ENCODE measurements at regions of chr9 and their contacts with region 1.

Region 1: DNA sequence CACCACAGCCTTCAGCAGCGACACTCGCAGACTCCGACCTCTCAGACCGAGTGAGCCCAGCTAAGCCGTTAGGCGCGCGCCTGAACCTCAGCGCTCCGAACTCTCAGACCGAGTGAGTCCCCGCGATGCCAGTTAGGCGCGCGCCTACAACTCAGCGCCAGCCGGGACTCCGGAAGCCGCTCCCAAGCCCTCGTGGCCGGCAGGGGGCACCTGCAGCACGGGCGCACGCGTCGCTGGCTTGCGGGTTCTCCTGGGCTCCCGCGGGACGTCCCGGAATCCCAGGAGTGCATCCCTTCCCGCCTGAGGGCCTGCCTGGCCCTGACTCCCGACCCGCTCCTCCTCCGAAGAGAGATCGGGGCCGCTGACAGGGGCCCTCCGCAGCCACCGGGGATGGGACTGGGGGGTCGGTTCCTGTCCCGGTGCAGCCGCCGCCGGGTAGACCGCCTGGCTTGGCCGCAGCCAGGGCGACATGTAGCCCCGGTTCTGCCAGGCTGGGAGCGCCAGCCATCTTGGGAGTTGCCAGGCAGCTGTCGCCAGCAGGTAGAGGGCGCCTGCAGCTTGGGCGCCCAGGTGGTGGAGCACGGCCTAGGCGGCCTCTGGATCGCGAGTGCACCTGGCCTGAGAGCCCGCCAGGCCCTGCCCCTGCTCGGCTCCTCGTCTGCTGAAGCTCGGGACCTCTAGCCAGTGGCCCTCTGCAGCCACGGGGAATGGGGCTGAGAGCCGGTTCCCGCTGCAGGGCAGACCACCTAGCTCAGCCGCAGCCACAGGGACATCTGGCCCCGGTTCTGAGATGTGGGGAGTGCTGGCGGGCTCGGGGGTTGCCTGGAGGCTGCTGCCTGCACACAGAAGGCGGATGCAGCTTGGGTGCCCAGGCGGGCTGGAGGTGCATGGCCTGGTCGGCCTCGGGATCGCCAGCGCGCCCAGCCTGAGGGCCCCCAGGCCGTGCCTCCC is at the start of gene ANKRD18A:
- DNase-seq: peak; percentile 87
- H3K4me3 Mint-ChIP-seq: peak within 1 kb of the TSS; percentile 92
- H3K27ac Mint-ChIP-seq: peak within 1 kb of the TSS; percentile 90
- H3K4me1 Mint-ChIP-seq: peaks cover 11% of the 10 kb centered on the region
- H3K27me3 Mint-ChIP-seq: peaks cover 11% of the 10 kb centered on the region
- total RNA-seq, gene ANKRD18A: 6.1 to 8.1 TPM

Region 2: DNA sequence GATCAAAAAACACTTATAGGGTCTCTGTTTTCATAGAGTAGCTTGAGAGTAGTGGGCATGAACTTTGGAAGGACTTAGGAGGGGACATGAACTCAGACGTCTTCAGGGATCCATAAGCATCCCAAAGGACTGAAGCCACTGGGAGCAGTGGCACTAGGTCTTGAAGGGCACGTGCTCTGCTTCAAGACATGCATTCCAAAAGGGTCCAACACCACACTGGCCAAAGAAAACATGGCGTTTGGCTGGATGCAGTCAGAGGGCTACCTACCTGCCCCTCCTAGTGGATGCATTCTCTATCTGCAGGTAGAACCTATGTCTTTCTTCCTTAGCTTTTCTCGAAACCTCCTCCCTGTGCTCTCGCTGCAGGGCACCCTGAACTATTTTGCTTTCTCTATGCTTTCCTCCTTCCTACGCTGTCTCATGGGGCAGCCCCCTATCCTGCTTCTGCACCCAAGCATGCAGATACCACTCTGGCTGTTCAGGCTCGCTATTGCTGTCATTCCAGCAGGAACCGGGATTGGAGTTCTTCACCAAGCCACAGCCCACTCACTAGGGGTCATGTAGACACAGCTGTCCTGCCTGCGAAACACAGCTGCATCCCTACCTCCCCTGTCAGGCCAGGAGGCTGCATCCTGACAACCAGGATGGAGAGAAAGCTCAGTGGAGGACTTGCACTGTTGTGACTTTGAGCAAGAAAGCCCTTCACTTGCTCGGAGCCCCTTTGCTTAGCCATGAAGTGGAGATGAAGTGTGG is 87.3 kb after region 1 on chr9:
- CTCF ChIA-PET with region 1: interaction called, 4 read pairs
- intact Hi-C with region 1: loop called (anchors 5 kb)
- DNase-seq: no peak
- H3K4me3 Mint-ChIP-seq: no peak overlapping the region
- H3K27ac Mint-ChIP-seq: no peak overlapping the region
- H3K4me1 Mint-ChIP-seq: no peaks in the 10 kb centered on the region
- H3K27me3 Mint-ChIP-seq: peaks cover 25% of the 10 kb centered on the region

Measured in activated naive CD4-positive, alpha-beta T cell treated with anti-CD3 and anti-CD28 coated beads for 36 hours (primary cell).